AG04450 (cell line): ENCODE measurements at regions of chr1 and their contacts with region 1.

Region 1: GRCh38 chr1:85259118-85259911 is at the start of gene C1orf52:
- DNase-seq: peak; percentile 83
- H3K4me3 ChIP-seq: peak within 1 kb of the TSS; percentile 89
- H3K27ac ChIP-seq: peak within 1 kb of the TSS; percentile 42
- H3K27me3 ChIP-seq: no peaks in the 10 kb centered on the region
- CTCF ChIP-seq: peak; percentile 91
- polyA plus RNA-seq, gene C1orf52: 28.0 and 31.2 TPM in 2 replicates

Region 2: DNA sequence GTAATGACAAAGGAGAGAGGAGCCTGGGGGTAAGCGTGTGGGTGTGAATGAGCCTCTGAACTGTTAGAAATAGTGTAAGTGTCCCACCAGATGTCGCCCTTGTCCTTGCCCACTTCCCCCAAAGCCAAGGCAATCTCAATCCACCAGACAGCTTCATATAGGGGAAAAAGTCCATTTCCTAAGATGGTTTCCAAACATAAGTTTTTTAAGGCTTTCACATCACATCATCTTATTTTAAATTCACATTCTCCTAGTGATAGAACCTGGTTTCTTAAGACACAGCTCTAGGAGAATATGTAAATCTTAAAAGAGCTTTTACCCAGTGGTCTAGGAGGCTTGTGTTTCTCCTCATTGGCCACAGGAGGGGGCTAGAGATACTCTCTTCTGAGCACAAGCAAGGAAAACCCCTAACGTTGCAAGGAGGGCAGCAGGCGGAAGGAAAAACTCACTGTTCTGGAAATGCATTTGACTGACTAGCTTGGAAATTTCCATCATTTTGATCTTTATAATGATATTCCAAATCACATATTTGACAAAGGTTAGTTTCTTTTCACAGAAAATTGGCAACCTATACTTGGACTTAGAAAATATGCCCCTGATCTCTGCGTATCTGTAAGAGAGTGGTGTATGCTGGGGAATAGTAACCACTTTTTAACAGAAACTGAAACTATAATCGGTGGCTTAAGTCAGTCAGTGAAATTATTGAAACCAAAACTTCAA is 314.4 kb before region 1 on chr1:
- CTCF ChIA-PET with region 1: interaction called, 330 read pairs
- POLR2A ChIA-PET with region 1: interaction called, 4 read pairs
- DNase-seq: peak; percentile 90
- H3K4me3 ChIP-seq: peak overlapping the region; percentile 37
- H3K27ac ChIP-seq: no peak overlapping the region
- H3K27me3 ChIP-seq: peaks cover 8% of the 10 kb centered on the region
- CTCF ChIP-seq: peak; percentile 77

Region 3: GRCh38 chr1:85109475-85109874 is 149.8 kb before region 1 on chr1:
- CTCF ChIA-PET with region 1: interaction called, 350 read pairs
- POLR2A ChIA-PET with region 1: interaction called, 3 read pairs
- DNase-seq: peak; percentile 38
- H3K4me3 ChIP-seq: no peak overlapping the region
- H3K27ac ChIP-seq: no peak overlapping the region
- H3K27me3 ChIP-seq: peaks cover 2% of the 10 kb centered on the region
- CTCF ChIP-seq: peak; percentile 94

Region 4: GRCh38 chr1:85166351-85166750 is 93.0 kb before region 1 on chr1:
- CTCF ChIA-PET with region 1: interaction called, 34 read pairs
- POLR2A ChIA-PET with region 1: no interaction called
- DNase-seq: no peak
- H3K4me3 ChIP-seq: no peak overlapping the region
- H3K27ac ChIP-seq: no peak overlapping the region
- H3K27me3 ChIP-seq: no peaks in the 10 kb centered on the region
- CTCF ChIP-seq: no peak

Region 5: GRCh38 chr1:85224734-85225623 is 34.3 kb before region 1 on chr1:
- CTCF ChIA-PET with region 1: interaction called, 19 read pairs
- POLR2A ChIA-PET with region 1: interaction called, 3 read pairs
- DNase-seq: no peak
- H3K4me3 ChIP-seq: no peak overlapping the region
- H3K27ac ChIP-seq: no peak overlapping the region
- H3K27me3 ChIP-seq: no peaks in the 10 kb centered on the region
- CTCF ChIP-seq: no peak

Region 6: DNA sequence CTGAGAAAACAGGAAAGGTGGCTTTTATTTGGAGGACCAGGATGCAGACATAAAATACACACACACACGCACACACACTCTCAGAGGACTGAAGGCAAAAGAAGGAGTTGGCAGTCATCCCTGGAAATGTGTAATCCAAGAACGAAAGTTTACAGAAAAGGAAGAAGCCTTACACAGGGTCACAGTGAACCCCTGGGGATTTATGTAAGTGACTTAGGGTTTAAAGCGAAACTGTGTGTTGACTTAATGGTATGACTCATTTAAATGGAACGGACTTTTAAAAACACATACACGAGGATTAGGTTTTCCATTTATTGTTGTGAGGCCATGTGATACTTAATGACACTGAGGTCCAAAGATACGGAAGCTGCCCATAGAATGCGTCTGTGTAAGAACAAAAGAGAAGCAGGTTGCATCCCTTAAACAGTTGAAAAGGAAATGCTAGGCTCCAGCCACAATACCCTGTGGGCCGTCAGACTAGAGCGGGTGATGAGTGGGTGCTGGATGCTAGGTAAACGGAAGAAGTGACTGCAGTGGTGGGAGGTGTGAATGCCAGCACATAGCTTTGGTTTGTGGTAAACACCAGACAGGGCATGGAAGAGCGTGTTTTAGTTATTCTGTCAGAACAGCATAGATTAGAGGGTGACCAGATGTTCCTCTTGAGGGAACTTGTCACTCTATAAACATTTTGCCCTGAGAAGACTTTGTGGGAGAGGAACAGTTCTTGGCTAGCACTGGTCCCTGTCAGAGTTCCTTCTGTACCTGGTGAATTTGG is 38.7 kb after region 1 on chr1:
- CTCF ChIA-PET with region 1: interaction called, 12 read pairs
- POLR2A ChIA-PET with region 1: interaction called, 3 read pairs
- DNase-seq: peak; percentile 98
- H3K4me3 ChIP-seq: peak overlapping the region; percentile 20; the same call in 1 of the 2 replicates
- H3K27ac ChIP-seq: peak overlapping the region; percentile 94
- H3K27me3 ChIP-seq: no peaks in the 10 kb centered on the region
- CTCF ChIP-seq: no peak

Region 7: GRCh38 chr1:85478366-85478765 is 219.1 kb after region 1 on chr1:
- CTCF ChIA-PET with region 1: no interaction called
- POLR2A ChIA-PET with region 1: no interaction called
- DNase-seq: no peak
- H3K4me3 ChIP-seq: no peak overlapping the region
- H3K27ac ChIP-seq: no peak overlapping the region
- H3K27me3 ChIP-seq: no peaks in the 10 kb centered on the region
- CTCF ChIP-seq: no peak

Region 8: GRCh38 chr1:85661767-85662166 is 402.5 kb after region 1 on chr1:
- CTCF ChIA-PET with region 1: no interaction called
- POLR2A ChIA-PET with region 1: no interaction called
- DNase-seq: no peak
- H3K4me3 ChIP-seq: no peak overlapping the region
- H3K27ac ChIP-seq: no peak overlapping the region
- H3K27me3 ChIP-seq: no peaks in the 10 kb centered on the region
- CTCF ChIP-seq: no peak